CD8-positive, alpha-beta memory T cell (primary cell): ENCODE measurements at regions of chr5 and their contacts with region 1.

Region 1: GRCh38 chr5:14644623-14645237 is 19.8 kb upstream of the OTULIN start:
- DNase-seq: no peak
- H3K4me3 ChIP-seq: no peak overlapping the region
- H3K4me3 Mint-ChIP-seq: no peak overlapping the region
- H3K27ac ChIP-seq: no peak overlapping the region
- H3K27ac Mint-ChIP-seq: peak overlapping the region in 1 of 8 donors; percentile 90
- H3K4me1 ChIP-seq: no peaks in the 10 kb centered on the region
- H3K4me1 Mint-ChIP-seq: peaks cover 0 to 4% (median 2%) of the 10 kb centered on the region in 3 donors
- H3K27me3 ChIP-seq: no peaks in the 10 kb centered on the region
- H3K27me3 Mint-ChIP-seq: peaks cover 9 to 28% of the 10 kb centered on the region in 2 donors

Region 2: DNA sequence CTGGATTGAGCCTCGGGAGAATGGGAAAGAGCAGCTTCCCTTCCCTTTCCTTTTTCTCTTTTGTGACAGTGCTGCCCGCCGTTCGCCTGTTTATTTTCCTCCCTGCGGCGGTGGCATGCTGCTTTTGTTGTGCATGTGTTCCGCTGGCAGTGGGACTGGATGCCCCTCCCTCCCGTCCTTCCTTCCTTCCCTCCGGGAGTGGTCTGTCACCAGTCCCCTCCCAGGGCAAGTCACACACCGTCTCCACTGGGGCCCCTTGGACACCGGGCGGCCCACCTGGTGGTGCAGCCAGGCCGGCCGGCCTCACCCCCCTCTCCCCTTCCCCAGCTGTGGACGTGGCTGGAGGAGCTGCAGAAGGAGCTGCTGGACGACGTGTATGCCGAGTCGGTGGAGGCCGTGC is 286.9 kb before region 1 on chr5:
- CTCF ChIA-PET with region 1: interaction called, 122 read pairs
- POLR2A ChIA-PET with region 1: no interaction called
- DNase-seq: no peak
- H3K4me3 ChIP-seq: no peak overlapping the region
- H3K4me3 Mint-ChIP-seq: no peak overlapping the region
- H3K27ac ChIP-seq: no peak overlapping the region
- H3K27ac Mint-ChIP-seq: no peak overlapping the region
- H3K4me1 ChIP-seq: no peaks in the 10 kb centered on the region
- H3K4me1 Mint-ChIP-seq: peaks cover 0 to 7% (median 0%) of the 10 kb centered on the region in 3 donors
- H3K27me3 ChIP-seq: no peaks in the 10 kb centered on the region
- H3K27me3 Mint-ChIP-seq: peaks cover 3 to 5% of the 10 kb centered on the region in 2 donors

Region 3: GRCh38 chr5:14364576-14365472 is 279.9 kb before region 1 on chr5:
- CTCF ChIA-PET with region 1: interaction called, 122 read pairs
- POLR2A ChIA-PET with region 1: no interaction called
- DNase-seq: no peak
- H3K4me3 ChIP-seq: no peak overlapping the region
- H3K4me3 Mint-ChIP-seq: no peak overlapping the region
- H3K27ac ChIP-seq: no peak overlapping the region
- H3K27ac Mint-ChIP-seq: peak overlapping the region in 5 of 8 donors; percentile 1 to 70 (median 60)
- H3K4me1 ChIP-seq: peaks cover 25% of the 10 kb centered on the region
- H3K4me1 Mint-ChIP-seq: peaks cover 16 to 37% (median 32%) of the 10 kb centered on the region in 3 donors
- H3K27me3 ChIP-seq: no peaks in the 10 kb centered on the region
- H3K27me3 Mint-ChIP-seq: peaks cover 2 to 3% of the 10 kb centered on the region in 2 donors

Region 4: DNA sequence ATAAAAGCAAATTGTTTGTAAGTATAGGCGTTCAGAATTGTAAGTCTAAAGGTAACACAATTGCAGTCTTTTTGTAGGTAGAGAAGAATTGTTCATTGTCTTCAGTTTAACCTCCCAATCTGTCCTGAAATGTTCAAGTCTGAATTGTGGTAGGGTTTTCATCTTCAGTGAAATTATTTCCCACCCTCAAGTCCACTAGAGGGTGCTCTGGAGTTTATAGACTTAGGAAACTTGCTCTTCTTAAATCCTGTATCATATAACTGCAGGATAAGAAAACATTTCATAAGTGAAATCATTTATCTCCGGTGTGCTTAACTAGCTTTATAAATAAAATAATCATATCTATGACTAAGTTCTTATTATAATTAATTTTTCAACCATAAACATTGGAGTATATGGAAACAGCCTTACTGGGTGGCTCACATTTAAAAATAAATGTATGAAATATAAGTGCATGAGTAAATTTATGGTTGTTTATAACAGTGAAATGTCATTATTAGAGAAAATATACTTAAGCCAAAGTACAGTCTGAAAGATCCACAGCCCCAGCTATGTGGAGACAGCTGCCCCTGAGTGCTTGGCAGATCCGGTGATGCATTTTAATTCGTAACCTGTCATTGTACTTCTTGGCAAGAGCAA is 245.6 kb before region 1 on chr5:
- CTCF ChIA-PET with region 1: interaction called, 69 read pairs
- POLR2A ChIA-PET with region 1: no interaction called
- DNase-seq: peak in 2 of 5 donors; percentile 6 to 48
- H3K4me3 ChIP-seq: no peak overlapping the region
- H3K4me3 Mint-ChIP-seq: no peak overlapping the region
- H3K27ac ChIP-seq: no peak overlapping the region
- H3K27ac Mint-ChIP-seq: no peak overlapping the region
- H3K4me1 ChIP-seq: no peaks in the 10 kb centered on the region
- H3K4me1 Mint-ChIP-seq: peaks cover 2 to 25% (median 18%) of the 10 kb centered on the region in 3 donors
- H3K27me3 ChIP-seq: no peaks in the 10 kb centered on the region
- H3K27me3 Mint-ChIP-seq: peaks cover 0 to 6% of the 10 kb centered on the region in 2 donors

Region 5: GRCh38 chr5:14581333-14581890 is 63.3 kb before region 1 on chr5 and contains the start of gene OTULINL:
- CTCF ChIA-PET with region 1: interaction called, 10 read pairs
- POLR2A ChIA-PET with region 1: interaction called, 5 read pairs
- DNase-seq: peak; percentile 81 to 91 (median 83)
- H3K4me3 ChIP-seq: peak within 1 kb of the TSS; percentile 60
- H3K4me3 Mint-ChIP-seq: peak within 1 kb of the TSS; percentile 86 to 97 (median 88)
- H3K27ac ChIP-seq: peak within 1 kb of the TSS; percentile 71
- H3K27ac Mint-ChIP-seq: peak within 1 kb of the TSS; percentile 85 to 97 (median 95)
- H3K4me1 ChIP-seq: peaks cover 13% of the 10 kb centered on the region
- H3K4me1 Mint-ChIP-seq: peaks cover 39 to 51% (median 50%) of the 10 kb centered on the region in 3 donors
- H3K27me3 ChIP-seq: no peaks in the 10 kb centered on the region
- H3K27me3 Mint-ChIP-seq: peaks cover 0 to 9% of the 10 kb centered on the region in 2 donors
- total RNA-seq, gene OTULINL: 15.4 to 19.6 TPM

Region 6: GRCh38 chr5:14659821-14660607 is 15.3 kb after region 1 on chr5:
- CTCF ChIA-PET with region 1: interaction called, 27 read pairs
- POLR2A ChIA-PET with region 1: no interaction called
- DNase-seq: no peak
- H3K4me3 ChIP-seq: no peak overlapping the region
- H3K4me3 Mint-ChIP-seq: no peak overlapping the region
- H3K27ac ChIP-seq: no peak overlapping the region
- H3K27ac Mint-ChIP-seq: peak overlapping the region in 1 of 8 donors; percentile 42
- H3K4me1 ChIP-seq: peaks cover 14% of the 10 kb centered on the region
- H3K4me1 Mint-ChIP-seq: peaks cover 21 to 64% (median 54%) of the 10 kb centered on the region in 3 donors
- H3K27me3 ChIP-seq: no peaks in the 10 kb centered on the region
- H3K27me3 Mint-ChIP-seq: peaks cover 0 to 2% of the 10 kb centered on the region in 2 donors

Region 7: GRCh38 chr5:14665949-14666348 is 21.2 kb after region 1 on chr5:
- CTCF ChIA-PET with region 1: interaction called, 12 read pairs
- POLR2A ChIA-PET with region 1: no interaction called
- DNase-seq: peak; percentile 30 to 70 (median 45)
- H3K4me3 ChIP-seq: peak overlapping the region; percentile 73
- H3K4me3 Mint-ChIP-seq: peak overlapping the region; percentile 86 to 98 (median 95)
- H3K27ac ChIP-seq: no peak overlapping the region
- H3K27ac Mint-ChIP-seq: peak overlapping the region; percentile 92 to 99 (median 96)
- H3K4me1 ChIP-seq: peaks cover 64% of the 10 kb centered on the region
- H3K4me1 Mint-ChIP-seq: peaks cover 61 to 87% (median 85%) of the 10 kb centered on the region in 3 donors
- H3K27me3 ChIP-seq: no peaks in the 10 kb centered on the region
- H3K27me3 Mint-ChIP-seq: peaks cover 0 to 2% of the 10 kb centered on the region in 2 donors

Region 8: DNA sequence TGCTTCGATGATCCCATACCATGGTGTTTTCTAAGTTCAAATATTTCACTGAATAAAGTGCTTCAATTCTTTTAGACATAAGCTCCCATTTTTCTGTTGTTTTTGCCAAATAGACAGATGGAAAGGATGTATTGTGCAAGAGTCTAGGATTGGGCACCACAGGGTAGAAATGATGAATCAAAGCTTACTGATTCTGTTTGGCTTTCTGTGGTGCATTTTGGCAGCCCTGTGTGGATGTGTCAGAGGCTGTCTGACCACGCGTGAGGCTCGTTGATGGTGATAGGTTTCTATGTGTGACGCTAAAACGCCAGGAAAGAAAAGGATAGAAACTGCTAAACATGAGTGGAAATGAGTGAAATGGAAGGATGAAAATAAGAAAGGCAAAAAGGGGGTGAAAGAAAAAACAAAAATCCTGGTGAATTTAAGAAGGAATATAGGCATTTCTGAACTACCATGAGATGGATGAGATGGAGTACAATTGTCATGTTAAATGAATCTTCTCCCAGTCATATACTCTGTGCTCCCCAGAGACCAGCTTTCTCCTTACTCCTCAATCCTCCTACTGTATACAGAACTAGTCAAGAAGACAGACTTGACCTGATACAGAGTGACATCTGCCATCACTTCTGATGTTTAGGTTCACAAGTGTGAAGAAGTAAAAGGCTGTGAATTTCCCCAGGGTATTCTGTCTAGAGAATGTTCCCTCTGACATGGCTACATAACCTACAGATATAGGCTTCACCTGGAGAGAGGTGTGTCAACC is 172.4 kb after region 1 on chr5:
- CTCF ChIA-PET with region 1: no interaction called
- POLR2A ChIA-PET with region 1: no interaction called
- DNase-seq: no peak
- H3K4me3 ChIP-seq: no peak overlapping the region
- H3K4me3 Mint-ChIP-seq: no peak overlapping the region
- H3K27ac ChIP-seq: no peak overlapping the region
- H3K27ac Mint-ChIP-seq: peak overlapping the region in 3 of 8 donors; percentile 3 to 77 (median 7)
- H3K4me1 ChIP-seq: peaks cover 16% of the 10 kb centered on the region
- H3K4me1 Mint-ChIP-seq: peaks cover 47 to 75% (median 54%) of the 10 kb centered on the region in 3 donors
- H3K27me3 ChIP-seq: no peaks in the 10 kb centered on the region
- H3K27me3 Mint-ChIP-seq: peaks cover 0 to 1% of the 10 kb centered on the region in 2 donors